Activated naive CD4-positive, alpha-beta T cell treated with anti-CD3 and anti-CD28 coated beads for 36 hours (primary cell): ENCODE measurements at regions of chr5 and their contacts with region 1.

Region 1: GRCh38 chr5:39283231-39283818 is 64.0 kb upstream of the FYB1 start:
- DNase-seq: peak; percentile 75
- H3K4me3 Mint-ChIP-seq: no peak overlapping the region
- H3K27ac Mint-ChIP-seq: peak overlapping the region; percentile 69
- H3K4me1 Mint-ChIP-seq: peaks cover 47% of the 10 kb centered on the region
- H3K27me3 Mint-ChIP-seq: no peaks in the 10 kb centered on the region

Region 2: DNA sequence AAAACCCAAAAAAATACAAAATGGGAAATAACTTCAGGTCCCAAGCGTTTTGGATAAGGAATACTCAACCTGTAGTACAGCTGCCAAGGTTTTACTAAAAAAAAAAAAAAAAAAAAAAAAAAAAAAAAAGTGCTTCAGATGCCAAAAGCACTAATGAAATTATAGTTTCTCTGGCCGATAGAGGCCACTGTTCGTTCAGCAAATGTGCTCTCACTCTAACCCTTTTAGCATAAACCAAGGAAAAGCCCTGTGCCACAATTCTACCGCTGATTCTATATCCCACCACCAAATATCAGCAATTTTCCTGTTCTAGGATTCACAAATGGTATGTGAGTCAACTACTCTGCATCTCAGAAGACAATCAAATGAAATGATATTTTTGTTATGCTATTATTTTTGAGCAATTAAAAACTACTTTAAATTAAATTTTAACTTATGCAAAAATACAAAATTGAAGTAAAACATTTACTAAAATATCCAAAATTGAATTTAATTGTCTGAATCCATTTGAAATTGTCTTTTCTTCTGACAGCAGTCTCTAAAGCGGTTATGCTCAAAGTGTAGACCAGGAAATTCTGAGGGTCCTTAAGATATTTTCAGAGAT is 288.9 kb before region 1 on chr5:
- CTCF ChIA-PET with region 1: interaction called, 3 read pairs
- intact Hi-C with region 1: loop called (anchors 1 kb)
- DNase-seq: peak; percentile 55
- H3K4me3 Mint-ChIP-seq: no peak overlapping the region
- H3K27ac Mint-ChIP-seq: no peak overlapping the region
- H3K4me1 Mint-ChIP-seq: peaks cover 14% of the 10 kb centered on the region
- H3K27me3 Mint-ChIP-seq: no peaks in the 10 kb centered on the region

Region 3: DNA sequence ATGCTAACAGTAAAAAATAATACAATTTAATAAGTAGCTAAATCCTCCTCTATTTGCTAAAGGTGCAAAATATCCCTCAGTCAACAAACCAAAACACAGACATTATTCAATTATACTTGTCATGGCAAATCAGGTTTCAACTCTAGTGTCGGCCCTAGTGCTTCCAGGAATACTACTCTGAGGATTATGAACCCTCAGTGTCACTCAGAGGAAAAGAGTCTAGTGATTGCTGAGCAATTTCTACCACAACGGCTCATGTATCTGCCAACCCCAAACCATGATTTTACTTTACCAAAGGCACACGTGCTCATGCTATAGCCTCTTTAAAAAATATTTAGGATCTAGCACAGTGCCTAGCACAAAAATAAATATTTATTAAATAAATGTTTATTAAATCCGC is 230.1 kb before region 1 on chr5:
- CTCF ChIA-PET with region 1: no interaction called
- intact Hi-C with region 1: no loop called
- DNase-seq: no peak
- H3K4me3 Mint-ChIP-seq: no peak overlapping the region
- H3K27ac Mint-ChIP-seq: no peak overlapping the region
- H3K4me1 Mint-ChIP-seq: peaks cover 40% of the 10 kb centered on the region
- H3K27me3 Mint-ChIP-seq: no peaks in the 10 kb centered on the region

Region 4: GRCh38 chr5:39138892-39139291 is 144.4 kb before region 1 on chr5:
- CTCF ChIA-PET with region 1: interaction called, 14 read pairs
- intact Hi-C with region 1: no loop called
- DNase-seq: no peak
- H3K4me3 Mint-ChIP-seq: no peak overlapping the region
- H3K27ac Mint-ChIP-seq: no peak overlapping the region
- H3K4me1 Mint-ChIP-seq: peaks cover 23% of the 10 kb centered on the region
- H3K27me3 Mint-ChIP-seq: no peaks in the 10 kb centered on the region

Region 5: DNA sequence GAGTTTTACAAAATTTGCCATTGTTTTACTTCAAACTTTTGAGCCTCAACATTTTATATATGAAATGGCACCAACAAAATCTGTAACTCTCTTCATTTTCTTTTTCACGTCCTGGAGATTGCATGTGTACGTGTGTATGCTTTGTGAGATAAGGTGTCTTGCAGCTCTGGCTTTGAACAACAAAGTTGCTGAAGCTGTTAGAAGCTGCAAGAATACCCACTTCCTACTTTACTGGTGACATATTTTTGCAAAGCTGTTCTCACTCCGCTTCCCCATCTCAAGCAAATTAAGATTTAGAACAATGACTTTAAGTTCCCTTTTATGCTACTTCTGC is 105.7 kb before region 1 on chr5:
- CTCF ChIA-PET with region 1: interaction called, 5 read pairs
- intact Hi-C with region 1: loop called (anchors 1 kb)
- DNase-seq: no peak
- H3K4me3 Mint-ChIP-seq: peak overlapping the region; percentile 75
- H3K27ac Mint-ChIP-seq: peak overlapping the region; percentile 92
- H3K4me1 Mint-ChIP-seq: peaks cover 95% of the 10 kb centered on the region
- H3K27me3 Mint-ChIP-seq: no peaks in the 10 kb centered on the region

Region 6: DNA sequence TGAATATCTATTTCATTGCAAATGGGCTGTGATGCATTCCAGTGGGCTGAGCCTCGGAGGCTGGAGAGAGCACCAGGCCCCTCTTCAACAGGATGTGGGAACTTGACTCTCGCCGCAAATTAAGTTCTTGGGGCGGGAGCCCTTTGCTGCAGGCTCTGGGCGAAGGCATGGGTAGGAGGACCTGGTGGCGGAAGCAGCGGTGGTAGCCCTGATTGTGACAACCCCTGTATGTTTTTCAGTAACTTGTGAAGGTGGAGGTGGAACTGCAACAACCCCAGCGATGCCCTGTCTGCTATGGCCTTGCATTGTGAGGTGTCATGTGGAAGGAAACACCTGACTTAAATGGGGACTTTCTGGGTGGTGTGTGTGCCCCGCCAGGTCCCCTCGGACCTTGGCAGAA is 73.4 kb before region 1 on chr5:
- CTCF ChIA-PET with region 1: interaction called, 10 read pairs
- intact Hi-C with region 1: no loop called
- DNase-seq: peak; percentile 83
- H3K4me3 Mint-ChIP-seq: peak overlapping the region; percentile 80
- H3K27ac Mint-ChIP-seq: peak overlapping the region; percentile 99
- H3K4me1 Mint-ChIP-seq: peaks cover 78% of the 10 kb centered on the region
- H3K27me3 Mint-ChIP-seq: no peaks in the 10 kb centered on the region

Region 7: DNA sequence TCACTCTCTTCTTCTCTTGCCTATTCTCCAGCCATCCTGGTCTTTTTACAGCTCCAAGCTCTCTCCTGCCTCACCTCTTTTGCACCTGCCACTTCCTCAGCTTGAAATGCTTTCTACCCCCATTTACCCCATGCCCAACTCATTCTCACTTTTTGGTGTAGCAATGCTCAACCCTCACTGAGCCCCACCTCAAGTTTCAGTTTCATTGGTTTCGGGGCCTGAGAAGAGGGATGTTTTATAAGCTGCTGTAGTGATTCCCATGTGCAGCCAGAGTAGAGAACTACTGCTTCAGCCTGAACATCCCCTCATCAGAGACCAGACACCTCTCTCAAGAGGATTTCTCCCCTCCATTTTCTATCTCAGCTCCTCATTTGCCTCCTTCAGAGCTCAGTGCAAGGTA is 18.8 kb before region 1 on chr5:
- CTCF ChIA-PET with region 1: interaction called, 13 read pairs
- intact Hi-C with region 1: no loop called
- DNase-seq: no peak
- H3K4me3 Mint-ChIP-seq: no peak overlapping the region
- H3K27ac Mint-ChIP-seq: no peak overlapping the region
- H3K4me1 Mint-ChIP-seq: peaks cover 6% of the 10 kb centered on the region
- H3K27me3 Mint-ChIP-seq: no peaks in the 10 kb centered on the region

Region 8: GRCh38 chr5:39892708-39893107 is 609.4 kb after region 1 on chr5:
- CTCF ChIA-PET with region 1: no interaction called
- intact Hi-C with region 1: no loop called
- DNase-seq: no peak
- H3K4me3 Mint-ChIP-seq: no peak overlapping the region
- H3K27ac Mint-ChIP-seq: no peak overlapping the region
- H3K4me1 Mint-ChIP-seq: no peaks in the 10 kb centered on the region
- H3K27me3 Mint-ChIP-seq: peaks cover 3% of the 10 kb centered on the region